Panc1 (cell line): ENCODE measurements at regions of chr6 and their contacts with region 1.

Region 1: DNA sequence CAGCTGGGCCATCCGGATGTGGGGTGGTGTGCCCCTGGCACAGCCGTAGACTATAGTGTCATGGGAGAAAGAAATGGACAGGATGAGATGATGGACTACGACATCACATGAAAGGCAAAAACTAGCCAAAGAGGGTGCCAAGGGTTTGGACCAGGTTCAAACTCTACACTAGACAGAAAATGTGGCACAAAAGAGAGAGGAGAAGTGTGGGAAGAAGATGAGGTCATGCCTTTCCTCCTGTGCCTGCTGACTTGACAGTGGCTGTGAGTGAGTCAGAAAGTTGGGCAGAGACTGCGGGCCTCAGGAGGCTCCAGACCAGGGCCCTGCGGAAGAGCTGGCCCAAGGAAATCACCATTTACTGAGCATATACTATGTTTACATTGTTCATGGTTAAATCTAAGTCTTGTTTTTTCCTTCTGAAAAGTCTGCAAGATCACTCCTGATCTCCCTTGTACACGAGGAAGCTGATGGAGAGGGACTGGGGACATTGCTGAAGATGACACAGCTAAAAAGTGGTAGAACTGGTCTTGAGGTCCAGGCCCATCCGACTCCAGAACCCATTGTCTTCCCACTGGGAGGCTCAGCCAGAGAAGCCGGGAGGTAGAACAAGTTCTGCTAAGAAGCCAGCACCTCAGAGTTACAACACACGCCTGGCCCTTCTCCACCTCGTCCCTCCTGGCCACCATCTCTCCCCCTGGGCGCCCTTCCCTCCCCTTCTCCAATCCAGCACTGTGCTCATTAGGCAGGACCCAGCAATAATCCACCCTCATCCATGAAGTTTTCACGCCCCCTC is 35.7 kb downstream of the CNKSR3 start:
- DNase-seq: no peak
- ATAC-seq: no peak
- H3K4me3 ChIP-seq: no peak overlapping the region
- H3K27ac ChIP-seq: no peak overlapping the region
- H3K4me1 ChIP-seq: peaks cover 20% of the 10 kb centered on the region
- H3K27me3 ChIP-seq: no peaks in the 10 kb centered on the region
- CTCF ChIP-seq: no peak

Region 2: GRCh38 chr6:154370545-154370944 is 104.3 kb before region 1 on chr6:
- CTCF ChIA-PET with region 1: interaction called, 12 read pairs
- POLR2A ChIA-PET with region 1: no interaction called
- in situ Hi-C with region 1: no loop called
- intact Hi-C with region 1: no loop called
- DNase-seq: no peak
- ATAC-seq: peak; percentile 84
- H3K4me3 ChIP-seq: no peak overlapping the region
- H3K27ac ChIP-seq: peak overlapping the region; percentile 32; the same call in 1 of the 2 replicates
- H3K4me1 ChIP-seq: no peaks in the 10 kb centered on the region
- H3K27me3 ChIP-seq: no peaks in the 10 kb centered on the region
- CTCF ChIP-seq: peak; percentile 75

Region 3: DNA sequence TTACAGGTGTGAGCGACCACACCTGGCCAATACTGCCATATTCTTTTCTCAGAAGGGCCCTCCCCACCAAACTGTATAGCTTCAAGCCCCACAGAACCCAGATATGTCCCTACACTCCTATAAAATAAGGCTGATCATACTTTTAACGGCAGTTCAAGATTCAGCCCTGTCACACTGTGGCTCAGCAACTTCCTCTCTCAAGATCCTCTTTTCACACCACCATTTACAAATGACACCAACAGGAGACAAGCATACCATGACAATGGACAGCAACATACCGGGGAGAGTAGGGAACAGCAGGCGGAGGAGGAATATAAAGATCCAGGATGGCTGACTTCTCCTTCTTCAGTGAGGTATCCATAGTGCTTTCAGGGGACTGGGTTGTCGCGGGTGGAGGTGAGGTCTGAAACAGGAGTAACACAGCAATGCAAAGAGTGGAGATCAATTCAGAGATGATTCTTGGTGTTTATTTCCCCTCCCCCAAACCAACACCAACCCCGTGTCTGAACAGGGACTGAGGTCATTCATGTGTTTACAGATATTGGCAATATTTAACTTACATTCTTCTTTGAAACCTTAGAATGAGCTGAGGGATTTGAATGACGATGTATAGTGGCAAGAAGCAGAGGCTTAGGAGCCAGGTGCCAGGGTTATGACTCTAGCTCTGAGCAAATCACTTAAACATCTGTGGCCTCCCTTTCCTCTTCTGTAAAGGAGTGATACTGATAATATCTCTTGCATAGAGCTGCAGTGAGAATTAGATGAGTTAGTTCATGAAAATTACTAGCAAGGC is 60.6 kb before region 1 on chr6:
- CTCF ChIA-PET with region 1: no interaction called
- POLR2A ChIA-PET with region 1: interaction called, 10 read pairs
- in situ Hi-C with region 1: no loop called
- intact Hi-C with region 1: no loop called
- DNase-seq: no peak
- ATAC-seq: no peak
- H3K4me3 ChIP-seq: no peak overlapping the region
- H3K27ac ChIP-seq: no peak overlapping the region
- H3K4me1 ChIP-seq: peaks cover 9% of the 10 kb centered on the region
- H3K27me3 ChIP-seq: no peaks in the 10 kb centered on the region
- CTCF ChIP-seq: no peak

Region 4: GRCh38 chr6:154484942-154485341 is 10.1 kb after region 1 on chr6:
- CTCF ChIA-PET with region 1: no interaction called
- POLR2A ChIA-PET with region 1: interaction called, 18 read pairs
- in situ Hi-C with region 1: no loop called
- intact Hi-C with region 1: no loop called
- DNase-seq: no peak
- ATAC-seq: no peak
- H3K4me3 ChIP-seq: no peak overlapping the region
- H3K27ac ChIP-seq: no peak overlapping the region
- H3K4me1 ChIP-seq: peaks cover 28% of the 10 kb centered on the region
- H3K27me3 ChIP-seq: no peaks in the 10 kb centered on the region
- CTCF ChIP-seq: no peak

Region 5: DNA sequence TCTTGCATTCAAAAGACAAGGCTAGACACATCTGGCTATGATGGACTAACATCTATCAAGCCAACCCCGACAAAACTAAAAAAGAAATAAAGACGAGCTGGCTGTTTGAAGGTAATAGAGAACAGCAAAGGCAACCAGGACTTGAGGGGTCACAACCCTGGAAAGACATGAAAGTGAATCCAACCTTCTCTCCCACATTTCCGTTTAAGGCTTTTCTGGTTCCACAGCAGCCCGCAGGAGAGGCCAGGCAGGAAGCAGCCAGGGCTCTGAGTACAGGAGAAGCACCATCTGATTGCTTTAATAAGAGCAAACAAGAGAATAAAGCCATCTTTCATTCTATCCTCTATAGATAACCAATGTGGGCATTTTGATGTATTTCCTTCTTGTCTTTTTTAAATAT is 21.4 kb after region 1 on chr6:
- CTCF ChIA-PET with region 1: no interaction called
- POLR2A ChIA-PET with region 1: no interaction called
- in situ Hi-C with region 1: no loop called
- intact Hi-C with region 1: no loop called
- DNase-seq: no peak
- ATAC-seq: no peak
- H3K4me3 ChIP-seq: no peak overlapping the region
- H3K27ac ChIP-seq: no peak overlapping the region
- H3K4me1 ChIP-seq: no peaks in the 10 kb centered on the region
- H3K27me3 ChIP-seq: no peaks in the 10 kb centered on the region
- CTCF ChIP-seq: no peak